Common myeloid progenitor, CD34-positive (primary cell): ENCODE measurements at regions of chr19 and their contacts with region 1.

Region 1: GRCh38 chr19:53906211-53907192 is 2.6 kb upstream of the CACNG7 start:
- DNase-seq: peak in 2 of 3 donors; percentile 48 to 52
- H3K4me3 ChIP-seq: no peak overlapping the region
- H3K27ac ChIP-seq: no peak overlapping the region
- H3K4me1 ChIP-seq: peaks cover 0 to 13% (median 8%) of the 10 kb centered on the region in 4 experiments
- H3K27me3 ChIP-seq: peaks cover 0 to 71% (median 33%) of the 10 kb centered on the region in 5 experiments

Region 2: GRCh38 chr19:54002495-54003315 is 96.2 kb after region 1 on chr19:
- CTCF ChIA-PET with region 1: no interaction called
- POLR2A ChIA-PET with region 1: no interaction called
- DNase-seq: no peak
- H3K4me3 ChIP-seq: no peak overlapping the region
- H3K27ac ChIP-seq: no peak overlapping the region
- H3K4me1 ChIP-seq: no peaks in the 10 kb centered on the region
- H3K27me3 ChIP-seq: peaks cover 2 to 28% (median 11%) of the 10 kb centered on the region in 5 experiments

Region 3: GRCh38 chr19:54023191-54023590 is 116.7 kb after region 1 on chr19:
- CTCF ChIA-PET with region 1: interaction called, 13 read pairs
- POLR2A ChIA-PET with region 1: no interaction called
- DNase-seq: no peak
- H3K4me3 ChIP-seq: no peak overlapping the region
- H3K27ac ChIP-seq: no peak overlapping the region
- H3K4me1 ChIP-seq: peaks cover 6 to 32% (median 22%) of the 10 kb centered on the region in 4 experiments
- H3K27me3 ChIP-seq: no peaks in the 10 kb centered on the region